ENCODE measurements at regions of chr12 and their contacts with region 1.

Region 1: DNA sequence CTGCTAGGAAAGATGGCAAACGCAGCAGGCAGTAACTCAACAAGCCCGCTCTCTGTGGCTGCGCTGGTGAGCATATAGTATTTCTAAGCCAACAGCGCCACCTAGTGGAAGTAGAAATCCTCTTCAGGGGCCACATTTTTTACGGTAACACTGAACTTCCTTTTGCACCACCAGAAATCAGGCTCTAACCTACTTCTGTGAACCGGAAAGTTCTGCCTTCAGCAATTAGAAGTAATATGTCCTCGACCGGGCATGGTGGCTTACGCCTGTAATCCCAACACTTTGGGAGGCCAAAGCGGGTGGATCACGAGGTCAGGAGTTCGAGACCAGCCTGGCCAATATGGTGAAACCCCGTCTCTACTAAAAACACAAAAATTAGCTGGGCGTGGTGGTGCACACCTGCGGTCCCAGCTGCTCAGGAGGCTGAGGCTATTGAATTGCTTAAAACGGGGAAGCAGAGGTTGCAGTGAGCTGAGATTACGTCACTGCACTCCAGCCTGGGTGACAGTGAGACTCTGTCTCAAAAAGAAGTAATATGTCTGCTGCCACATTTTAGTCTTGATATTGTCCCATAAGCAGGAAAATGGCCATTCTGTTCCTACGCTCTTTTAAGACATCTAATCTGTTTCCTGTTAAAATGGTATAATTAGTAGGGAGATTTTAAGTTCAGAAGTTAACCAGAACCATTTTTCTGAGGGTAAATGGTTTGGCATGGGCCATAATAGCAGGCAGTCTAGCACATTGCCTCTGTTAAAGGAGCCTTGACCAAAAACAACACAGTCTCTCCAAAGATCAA is 26.8 kb downstream of the APOBEC1 start:
- DNase-seq: peak; percentile 94
- H3K4me3 Mint-ChIP-seq: peak overlapping the region; percentile 73
- H3K27ac Mint-ChIP-seq: peak overlapping the region; percentile 71
- H3K4me1 Mint-ChIP-seq: peaks cover 17% of the 10 kb centered on the region
- H3K27me3 Mint-ChIP-seq: peaks cover 19% of the 10 kb centered on the region

Region 2: DNA sequence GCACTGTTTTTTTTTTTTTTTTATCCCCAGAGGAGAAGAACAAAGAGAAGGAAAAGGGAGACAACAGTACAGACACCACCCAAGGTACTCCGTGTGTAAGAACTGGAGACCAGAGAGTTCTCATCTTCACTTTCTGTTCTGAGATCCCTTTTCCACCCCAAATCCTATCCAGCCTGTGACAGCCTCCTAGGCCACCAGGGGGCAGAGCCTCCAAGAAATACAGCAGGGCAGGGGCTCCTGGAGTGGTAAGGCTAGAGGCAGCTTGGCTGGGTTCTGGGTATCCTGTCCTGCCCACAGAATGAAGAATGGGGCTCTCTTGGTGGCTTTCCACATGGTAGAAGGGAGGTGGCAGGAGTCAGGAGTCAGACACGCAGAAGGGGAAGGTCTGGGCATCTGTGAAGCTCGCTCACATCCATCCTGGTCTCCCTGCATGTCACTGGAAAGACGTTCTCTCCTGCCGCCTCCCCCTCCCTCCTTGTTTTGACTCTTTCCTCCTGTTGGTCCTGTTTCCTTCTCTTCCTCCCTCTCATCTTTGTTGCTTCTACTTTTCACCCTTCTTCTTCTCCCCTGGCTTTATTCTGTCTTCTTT is 496.8 kb before region 1 on chr12:
- intact Hi-C with region 1: loop called (anchors 5 kb)
- DNase-seq: peak; percentile 86
- H3K4me3 Mint-ChIP-seq: no peak overlapping the region
- H3K27ac Mint-ChIP-seq: no peak overlapping the region
- H3K4me1 Mint-ChIP-seq: peaks cover 7% of the 10 kb centered on the region
- H3K27me3 Mint-ChIP-seq: no peaks in the 10 kb centered on the region

Region 3: GRCh38 chr12:7219599-7220243 is 419.2 kb before region 1 on chr12:
- intact Hi-C with region 1: loop called (anchors 1 kb)
- DNase-seq: peak; percentile 91
- H3K4me3 Mint-ChIP-seq: no peak overlapping the region
- H3K27ac Mint-ChIP-seq: no peak overlapping the region
- H3K4me1 Mint-ChIP-seq: no peaks in the 10 kb centered on the region
- H3K27me3 Mint-ChIP-seq: no peaks in the 10 kb centered on the region

Region 4: GRCh38 chr12:7460375-7461259 is 178.3 kb before region 1 on chr12:
- intact Hi-C with region 1: loop called (anchors 5 kb)
- DNase-seq: peak; percentile 85
- H3K4me3 Mint-ChIP-seq: no peak overlapping the region
- H3K27ac Mint-ChIP-seq: no peak overlapping the region
- H3K4me1 Mint-ChIP-seq: no peaks in the 10 kb centered on the region
- H3K27me3 Mint-ChIP-seq: peaks cover 10% of the 10 kb centered on the region

Region 5: DNA sequence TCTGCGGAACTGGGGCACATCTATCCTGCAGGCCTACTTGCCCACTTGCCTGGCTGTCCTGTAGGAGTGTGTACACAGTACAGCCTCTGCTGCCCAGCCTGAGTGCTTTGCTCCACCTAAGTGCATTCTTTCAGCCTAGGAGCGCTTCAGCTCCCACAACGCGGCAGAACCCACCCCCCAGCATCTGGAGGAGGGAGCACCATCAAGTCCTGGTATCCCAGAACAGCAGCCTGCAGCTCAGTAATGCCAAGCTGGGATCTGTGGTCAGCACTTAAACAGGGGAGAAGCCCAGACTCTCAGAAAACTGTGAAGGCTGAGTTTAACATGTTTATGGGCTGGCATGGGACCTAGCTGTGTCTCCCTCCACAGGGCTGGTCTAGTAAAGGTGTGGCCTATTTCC is 55.4 kb before region 1 on chr12:
- intact Hi-C with region 1: loop called (anchors 1 kb)
- DNase-seq: no peak
- H3K4me3 Mint-ChIP-seq: no peak overlapping the region
- H3K27ac Mint-ChIP-seq: no peak overlapping the region
- H3K4me1 Mint-ChIP-seq: peaks cover 7% of the 10 kb centered on the region
- H3K27me3 Mint-ChIP-seq: peaks cover 37% of the 10 kb centered on the region

Region 6: DNA sequence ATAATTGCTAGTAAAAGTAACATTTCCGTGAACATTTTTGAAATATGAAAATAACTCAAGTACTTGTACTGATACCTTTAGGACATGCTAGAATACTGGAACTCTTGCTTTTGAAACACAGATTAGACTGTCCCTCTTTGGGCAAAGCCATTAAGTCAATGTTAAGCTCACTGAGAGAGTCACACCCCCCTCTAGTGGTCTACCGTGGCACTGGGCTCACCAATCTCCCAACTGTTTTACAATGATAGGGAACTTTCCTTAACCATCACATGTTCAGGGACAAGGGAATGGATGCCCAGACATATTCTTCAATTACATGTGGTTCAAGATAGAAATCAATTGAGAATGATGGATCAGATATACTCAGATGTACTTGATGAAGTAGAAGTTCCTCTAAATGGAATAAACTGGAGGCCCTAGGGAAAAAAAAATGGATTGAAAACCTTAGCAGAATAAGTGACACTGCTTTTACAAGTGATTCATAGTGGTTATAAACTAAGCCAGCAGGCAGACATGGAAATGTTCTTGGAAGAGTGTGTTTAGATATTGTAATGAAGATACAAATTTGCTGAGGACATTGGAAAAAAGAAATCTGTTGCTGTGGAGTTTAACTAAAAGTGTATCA is 168.0 kb after region 1 on chr12:
- intact Hi-C with region 1: loop called (anchors 2 kb)
- DNase-seq: peak; percentile 87
- H3K4me3 Mint-ChIP-seq: no peak overlapping the region
- H3K27ac Mint-ChIP-seq: no peak overlapping the region
- H3K4me1 Mint-ChIP-seq: no peaks in the 10 kb centered on the region
- H3K27me3 Mint-ChIP-seq: peaks cover 3% of the 10 kb centered on the region

Measured in activated CD4-positive, alpha-beta T cell treated with anti-CD3 and anti-CD28 coated beads, Interleukin-2, amount 10 ng/mL, durations not matched to agents 24 days and 14 days (primary cell).